PC-9 (cell line): ENCODE measurements at regions of chr12 and their contacts with region 1.

Region 1: GRCh38 chr12:86264451-86265342 is 8.5 kb upstream of the MGAT4C start:
- DNase-seq: peak; percentile 70 to 78
- H3K4me3 ChIP-seq: peak overlapping the region; percentile 84
- H3K27ac ChIP-seq: peak overlapping the region; percentile 57
- H3K4me1 ChIP-seq: peaks cover 7% of the 10 kb centered on the region; the same call in 1 of the 2 replicates
- H3K27me3 ChIP-seq: no peaks in the 10 kb centered on the region
- CTCF ChIP-seq: no peak

Region 2: GRCh38 chr12:85963326-85963725 is 301.4 kb before region 1 on chr12:
- CTCF ChIA-PET with region 1: no interaction called
- POLR2A ChIA-PET with region 1: no interaction called
- intact Hi-C with region 1: loop called (anchors 10 kb)
- DNase-seq: no peak
- H3K4me3 ChIP-seq: no peak overlapping the region
- H3K27ac ChIP-seq: no peak overlapping the region
- H3K4me1 ChIP-seq: no peaks in the 10 kb centered on the region
- H3K27me3 ChIP-seq: no peaks in the 10 kb centered on the region
- CTCF ChIP-seq: no peak

Region 3: GRCh38 chr12:86006727-86007126 is 258.0 kb before region 1 on chr12:
- CTCF ChIA-PET with region 1: no interaction called
- POLR2A ChIA-PET with region 1: no interaction called
- intact Hi-C with region 1: no loop called
- DNase-seq: no peak
- H3K4me3 ChIP-seq: no peak overlapping the region
- H3K27ac ChIP-seq: no peak overlapping the region
- H3K4me1 ChIP-seq: no peaks in the 10 kb centered on the region
- H3K27me3 ChIP-seq: no peaks in the 10 kb centered on the region
- CTCF ChIP-seq: no peak

Region 4: GRCh38 chr12:86312232-86312631 is 47.5 kb after region 1 on chr12:
- CTCF ChIA-PET with region 1: no interaction called
- POLR2A ChIA-PET with region 1: no interaction called
- intact Hi-C with region 1: no loop called
- DNase-seq: no peak
- H3K4me3 ChIP-seq: no peak overlapping the region
- H3K27ac ChIP-seq: no peak overlapping the region
- H3K4me1 ChIP-seq: no peaks in the 10 kb centered on the region
- H3K27me3 ChIP-seq: no peaks in the 10 kb centered on the region
- CTCF ChIP-seq: no peak

Region 5: DNA sequence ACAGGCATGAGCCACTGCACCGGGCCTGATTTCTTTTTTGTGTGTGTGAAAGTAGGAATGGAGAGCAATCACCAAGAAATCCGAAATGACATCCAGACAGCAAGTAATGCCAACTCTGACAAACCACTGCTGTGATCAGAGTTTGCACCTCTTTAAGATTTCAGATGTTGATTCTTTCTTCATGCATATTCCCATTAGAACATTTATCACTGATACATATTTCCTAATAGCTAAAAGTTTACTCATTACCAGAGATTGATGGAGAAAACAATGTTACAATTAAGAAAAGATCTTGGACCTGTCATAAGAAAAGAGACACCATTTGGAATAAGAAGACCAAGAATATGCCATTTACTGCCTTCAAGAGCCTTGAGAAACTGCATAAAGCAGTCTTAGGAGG is 208.5 kb after region 1 on chr12:
- CTCF ChIA-PET with region 1: no interaction called
- POLR2A ChIA-PET with region 1: no interaction called
- intact Hi-C with region 1: no loop called
- DNase-seq: no peak
- H3K4me3 ChIP-seq: no peak overlapping the region
- H3K27ac ChIP-seq: no peak overlapping the region
- H3K4me1 ChIP-seq: no peaks in the 10 kb centered on the region
- H3K27me3 ChIP-seq: no peaks in the 10 kb centered on the region
- CTCF ChIP-seq: no peak

Region 6: DNA sequence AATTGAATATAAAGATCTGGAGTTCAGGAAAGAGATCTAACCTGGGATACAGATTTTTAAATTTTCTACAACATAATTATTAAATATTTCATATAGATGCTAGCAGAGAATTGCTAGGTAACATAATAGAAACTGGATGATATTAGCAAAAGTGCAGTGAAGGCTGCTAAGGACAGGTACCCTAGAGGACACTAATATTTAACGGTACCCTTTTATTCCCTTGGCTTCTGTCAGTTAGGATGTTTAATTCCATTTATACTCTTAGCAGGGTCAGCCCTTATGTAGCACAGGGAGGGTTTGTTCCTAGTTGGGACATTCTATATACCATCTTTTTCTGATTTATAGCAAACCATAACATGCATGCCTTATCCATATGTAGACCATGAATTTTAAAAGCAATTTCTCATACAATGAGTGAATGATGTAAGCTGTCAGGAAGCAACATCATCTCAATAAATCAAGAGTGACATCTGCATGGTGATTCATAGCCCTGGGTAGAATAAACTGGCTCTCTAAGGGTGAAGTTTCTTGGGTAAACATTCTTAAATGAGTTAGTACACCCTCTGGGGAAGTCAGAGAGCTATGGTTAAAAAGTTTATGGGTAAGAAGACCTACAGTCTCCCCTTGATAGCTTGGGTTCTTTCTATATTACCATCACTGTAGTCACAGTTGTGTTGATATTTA is 395.9 kb after region 1 on chr12:
- CTCF ChIA-PET with region 1: no interaction called
- POLR2A ChIA-PET with region 1: no interaction called
- intact Hi-C with region 1: loop called (anchors 10 kb)
- DNase-seq: peak in 1 of 2 experiments; percentile 70
- H3K4me3 ChIP-seq: no peak overlapping the region
- H3K27ac ChIP-seq: peak overlapping the region; percentile 76
- H3K4me1 ChIP-seq: peaks cover 20% of the 10 kb centered on the region
- H3K27me3 ChIP-seq: no peaks in the 10 kb centered on the region
- CTCF ChIP-seq: no peak

Region 7: DNA sequence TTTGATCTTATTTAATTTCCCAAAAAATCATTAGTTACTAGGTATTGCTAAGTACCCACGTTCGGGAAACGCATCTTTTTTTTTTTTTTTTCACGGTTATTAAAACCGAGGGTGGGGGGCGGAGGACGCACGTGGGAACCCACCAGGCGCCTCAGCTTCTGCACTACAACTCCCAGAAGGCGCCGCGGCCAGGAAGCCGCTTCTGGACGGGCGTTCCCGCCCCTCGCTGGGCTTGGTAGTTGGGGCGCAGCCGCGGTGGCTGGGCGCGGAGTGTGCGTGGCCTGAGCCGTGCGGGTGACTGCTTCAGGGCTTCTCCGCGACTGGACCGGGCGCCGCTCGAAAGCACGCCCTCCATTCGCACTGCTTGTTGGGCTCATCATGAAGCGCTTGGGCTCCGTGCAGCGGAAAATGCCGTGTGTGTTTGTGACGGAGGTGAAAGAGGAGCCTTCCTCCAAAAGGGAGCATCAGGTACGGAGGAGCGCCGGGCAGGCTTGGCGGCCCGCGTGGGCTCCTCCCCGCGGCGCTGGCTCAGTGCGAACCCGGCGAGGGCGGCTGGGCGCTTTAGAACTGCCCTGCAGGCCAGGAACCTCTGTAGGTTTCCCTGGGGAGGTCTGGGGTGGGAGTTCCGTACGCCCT is 1770.7 kb after region 1 on chr12:
- CTCF ChIA-PET with region 1: no interaction called
- POLR2A ChIA-PET with region 1: no interaction called
- intact Hi-C with region 1: loop called (anchors 5 kb)
- DNase-seq: peak; percentile 69 to 85
- H3K4me3 ChIP-seq: peak overlapping the region; percentile 74
- H3K27ac ChIP-seq: peak overlapping the region; percentile 27; the same call in 1 of the 2 replicates
- H3K4me1 ChIP-seq: peaks cover 20% of the 10 kb centered on the region
- H3K27me3 ChIP-seq: no peaks in the 10 kb centered on the region
- CTCF ChIP-seq: no peak